A549 (cell line): ENCODE measurements at regions of chr7 and their contacts with region 1.

Region 1: DNA sequence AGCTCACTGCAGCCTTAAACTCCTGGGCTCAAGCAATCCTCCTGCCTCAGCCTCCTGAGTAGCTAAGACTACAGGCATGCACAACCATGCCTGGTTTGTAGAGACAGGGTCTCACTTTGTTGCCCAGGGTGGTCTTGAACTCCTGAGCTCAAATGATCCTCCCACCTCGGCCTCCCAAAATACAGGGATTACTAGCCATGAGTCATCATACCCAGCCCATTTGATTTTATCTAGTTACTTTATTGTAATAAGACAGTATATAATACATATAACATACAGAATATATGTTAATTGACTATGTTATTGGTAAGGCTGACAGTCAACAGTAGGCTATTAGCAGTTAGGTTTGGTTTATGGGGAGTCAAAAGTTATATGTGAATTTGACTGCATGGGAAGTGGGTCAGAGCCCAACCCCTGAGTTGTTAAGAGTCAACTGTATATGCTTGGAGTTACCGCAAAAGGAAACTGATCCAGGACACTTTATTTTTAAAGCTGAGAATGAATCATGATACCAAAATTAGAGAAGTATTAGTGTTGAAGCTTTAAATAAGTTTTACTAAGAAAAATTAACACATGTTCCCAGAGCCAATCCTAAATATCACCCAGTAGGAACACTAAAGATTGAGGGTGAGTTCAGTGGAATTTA is 20.7 kb upstream of the KMT2E start:
- DNase-seq: no peak
- ATAC-seq: no peak
- H3K4me3 ChIP-seq: no peak overlapping the region
- H3K27ac ChIP-seq: no peak overlapping the region
- H3K4me1 ChIP-seq: peaks cover 16% of the 10 kb centered on the region; the same call in 2 of the 3 replicates
- CTCF ChIP-seq: no peak
- EP300 ChIP-seq: no peak
- POLR2A ChIP-seq: no peak
- RAD21 ChIP-seq: no peak

Region 2: GRCh38 chr7:105013221-105013815 is 20.0 kb after region 1 on chr7:
- CTCF ChIA-PET with region 1: interaction called, 5 read pairs
- POLR2A ChIA-PET with region 1: interaction called, 13 read pairs
- DNase-seq: peak; percentile 92 to 93
- ATAC-seq: peak; percentile 82 to 83
- H3K4me3 ChIP-seq: peak overlapping the region; percentile 90
- H3K27ac ChIP-seq: peak overlapping the region; percentile 99 to 100
- H3K4me1 ChIP-seq: peaks cover 49% of the 10 kb centered on the region
- CTCF ChIP-seq: 0 out of 3 replicates have a peak, but pooled peaks have one; percentile 15
- EP300 ChIP-seq: no peak
- POLR2A ChIP-seq: peak; percentile 96
- RAD21 ChIP-seq: no peak